Caco-2 (cell line): ENCODE measurements at regions of chr3 and their contacts with region 1.

Region 1: GRCh38 chr3:11643605-11644087 is at the start of gene VGLL4:
- DNase-seq: peak; percentile 81 to 84
- H3K4me3 ChIP-seq: peak within 1 kb of the TSS; percentile 77
- H3K4me3 Mint-ChIP-seq: peak within 1 kb of the TSS; percentile 72
- H3K27ac Mint-ChIP-seq: peak within 1 kb of the TSS; percentile 69
- H3K4me1 ChIP-seq: 0 out of 2 replicates have a peak, but pooled peaks cover 4% of the 10 kb centered on the region
- H3K4me1 Mint-ChIP-seq: peaks cover 8% of the 10 kb centered on the region
- H3K27me3 ChIP-seq: no peaks in the 10 kb centered on the region
- H3K27me3 Mint-ChIP-seq: no peaks in the 10 kb centered on the region
- CTCF ChIP-seq: peak in 1 of 2 experiments; percentile 24
- total RNA-seq, gene VGLL4: 42.8 and 46.1 TPM in 2 replicates

Region 2: GRCh38 chr3:11523572-11524101 is 120.0 kb before region 1 on chr3:
- CTCF ChIA-PET with region 1: no interaction called
- POLR2A ChIA-PET with region 1: no interaction called
- intact Hi-C with region 1: no loop called
- DNase-seq: no peak
- H3K4me3 ChIP-seq: no peak overlapping the region
- H3K4me3 Mint-ChIP-seq: no peak overlapping the region
- H3K27ac Mint-ChIP-seq: no peak overlapping the region
- H3K4me1 ChIP-seq: no peaks in the 10 kb centered on the region
- H3K4me1 Mint-ChIP-seq: no peaks in the 10 kb centered on the region
- H3K27me3 ChIP-seq: no peaks in the 10 kb centered on the region
- H3K27me3 Mint-ChIP-seq: no peaks in the 10 kb centered on the region
- CTCF ChIP-seq: no peak

Region 3: GRCh38 chr3:11600501-11601282 is 43.0 kb before region 1 on chr3:
- CTCF ChIA-PET with region 1: interaction called, 5 read pairs
- POLR2A ChIA-PET with region 1: no interaction called
- intact Hi-C with region 1: loop called (anchors 1 kb)
- DNase-seq: peak; percentile 90 to 93
- H3K4me3 ChIP-seq: no peak overlapping the region
- H3K4me3 Mint-ChIP-seq: peak overlapping the region; percentile 57
- H3K27ac Mint-ChIP-seq: peak overlapping the region; percentile 96
- H3K4me1 ChIP-seq: peaks cover 17% of the 10 kb centered on the region
- H3K4me1 Mint-ChIP-seq: peaks cover 33% of the 10 kb centered on the region
- H3K27me3 ChIP-seq: no peaks in the 10 kb centered on the region
- H3K27me3 Mint-ChIP-seq: no peaks in the 10 kb centered on the region
- CTCF ChIP-seq: peak in 1 of 2 experiments; percentile 6

Region 4: GRCh38 chr3:11619946-11620657 is 23.5 kb before region 1 on chr3:
- CTCF ChIA-PET with region 1: no interaction called
- POLR2A ChIA-PET with region 1: no interaction called
- intact Hi-C with region 1: loop called (anchors 2 kb)
- DNase-seq: no peak
- H3K4me3 ChIP-seq: no peak overlapping the region
- H3K4me3 Mint-ChIP-seq: no peak overlapping the region
- H3K27ac Mint-ChIP-seq: peak overlapping the region; percentile 52
- H3K4me1 ChIP-seq: peaks cover 57% of the 10 kb centered on the region
- H3K4me1 Mint-ChIP-seq: peaks cover 56% of the 10 kb centered on the region
- H3K27me3 ChIP-seq: no peaks in the 10 kb centered on the region
- H3K27me3 Mint-ChIP-seq: no peaks in the 10 kb centered on the region
- CTCF ChIP-seq: no peak